ENCODE measurements at regions of chr11 and their contacts with region 1.

Region 1: GRCh38 chr11:131899950-131900580 is 529.6 kb downstream of the NTM start:
- DNase-seq: no peak

Region 2: DNA sequence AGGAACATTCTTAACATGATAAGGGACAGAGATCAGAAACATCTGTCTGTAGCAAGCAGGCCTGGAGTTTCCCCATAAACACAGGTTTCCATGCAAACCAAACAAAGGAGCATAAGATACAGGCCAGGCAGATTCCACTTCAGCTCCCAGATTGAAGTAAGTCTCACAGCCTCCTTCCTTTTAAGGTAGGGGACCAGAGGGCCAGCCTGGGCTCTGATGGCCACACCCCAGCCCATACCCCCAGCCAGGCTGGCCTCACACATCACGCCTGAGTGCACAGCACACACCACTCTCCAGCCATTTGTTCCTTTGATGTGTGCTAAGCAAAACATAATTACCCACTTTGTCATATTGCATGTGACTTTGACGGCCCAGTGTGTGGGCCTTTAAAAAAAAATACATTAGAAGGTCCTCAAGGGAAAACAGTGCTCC is 10.9 kb before region 1 on chr11:
- intact Hi-C with region 1: no loop called
- DNase-seq: no peak

Region 3: DNA sequence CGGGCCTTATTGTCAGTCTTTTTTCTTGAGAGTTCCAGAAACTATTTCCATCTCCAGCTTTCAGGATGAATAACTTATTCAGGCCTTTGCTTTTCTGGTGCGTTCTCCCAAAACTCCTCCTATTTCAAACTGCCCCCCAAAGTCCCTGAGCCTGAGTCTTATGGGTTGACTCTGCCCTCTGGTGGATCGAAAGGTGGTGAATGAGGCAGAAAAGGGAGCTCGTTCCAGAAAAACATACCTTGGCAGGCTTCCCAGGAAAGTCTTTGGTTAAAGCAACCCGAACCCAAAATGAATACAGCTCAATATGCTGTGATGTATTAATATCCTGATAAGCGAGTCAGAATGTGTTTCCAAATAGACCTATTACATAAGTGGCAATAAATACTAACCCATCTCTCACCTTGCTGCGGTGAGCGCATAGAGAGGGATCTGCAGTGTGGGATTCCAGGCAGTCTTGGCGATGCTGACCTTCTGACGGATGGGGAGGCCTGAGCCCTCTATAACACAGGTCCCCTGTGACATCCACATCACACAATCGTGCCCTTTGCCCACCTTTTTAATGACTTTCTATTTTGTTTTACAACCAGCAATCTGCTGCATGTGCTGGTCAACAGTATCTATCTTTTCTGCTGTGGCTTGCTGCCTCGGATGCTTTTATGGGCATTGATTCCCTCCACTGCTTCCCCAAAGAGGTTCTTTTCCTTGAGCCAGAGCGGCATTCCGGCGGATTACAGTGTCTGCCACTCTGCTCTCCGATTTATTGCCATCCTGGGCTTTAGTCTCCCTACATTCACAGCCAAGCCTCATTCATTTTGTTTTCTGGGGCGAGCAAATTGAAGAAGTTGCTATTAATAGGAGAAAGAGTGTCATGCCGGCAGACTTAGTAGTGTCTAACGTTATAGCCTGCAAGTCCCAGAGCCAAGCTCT is 227.2 kb after region 1 on chr11:
- intact Hi-C with region 1: loop called in 1 of 2 experiments (anchors 5 kb)
- DNase-seq: no peak

Region 4: DNA sequence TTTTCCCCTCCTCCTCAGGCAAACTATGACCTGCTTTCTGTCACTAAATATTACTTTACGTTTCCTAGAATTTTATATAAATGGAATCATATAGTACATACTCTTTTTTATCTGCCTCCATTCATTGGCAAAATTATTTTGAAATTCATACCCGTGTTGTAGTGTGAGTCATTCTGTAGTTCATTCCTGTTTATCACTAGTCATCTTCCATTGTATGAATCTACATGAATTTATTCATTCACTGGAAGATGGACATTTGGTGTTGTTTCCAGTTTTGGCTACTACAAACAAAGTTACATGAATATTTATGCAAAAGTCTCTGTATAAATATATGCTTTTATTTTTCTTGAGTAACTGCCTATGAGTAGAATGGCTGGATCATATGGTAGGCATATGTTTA is 1693.0 kb after region 1 on chr11:
- intact Hi-C with region 1: loop called in 1 of 2 experiments (anchors 5 kb)
- DNase-seq: no peak